Prostate gland (tissue), 2 donors: ENCODE measurements at regions of chr15 and their contacts with region 1.

Region 1: GRCh38 chr15:83559310-83559966 is 94.5 kb upstream of the ADAMTSL3 start:
- DNase-seq: peak; percentile 55
- H3K4me3 ChIP-seq: no peak overlapping the region
- H3K27ac ChIP-seq: no peak overlapping the region
- H3K4me1 ChIP-seq: no peaks in the 10 kb centered on the region
- H3K27me3 ChIP-seq: no peaks in the 10 kb centered on the region
- CTCF ChIP-seq: peak; percentile 48 to 73 (median 64)
- POLR2A ChIP-seq: no peak

Region 2: GRCh38 chr15:83248151-83249029 is 311.0 kb before region 1 on chr15:
- intact Hi-C with region 1: loop called (anchors 5 kb)
- DNase-seq: peak; percentile 53
- H3K4me3 ChIP-seq: no peak overlapping the region
- H3K27ac ChIP-seq: no peak overlapping the region
- H3K4me1 ChIP-seq: no peaks in the 10 kb centered on the region
- H3K27me3 ChIP-seq: no peaks in the 10 kb centered on the region
- CTCF ChIP-seq: peak; percentile 87 to 94 (median 93)
- POLR2A ChIP-seq: no peak